Ovary (tissue), 10 donors: ENCODE measurements at regions of chr15 and their contacts with region 1.

Region 1: GRCh38 chr15:98668566-98669308 is 20.4 kb downstream of the IGF1R start:
- DNase-seq: no peak
- H3K4me3 ChIP-seq: no peak overlapping the region
- H3K27ac ChIP-seq: peak overlapping the region in 1 of 2 donors; percentile 22
- H3K4me1 ChIP-seq: peaks cover 30% of the 10 kb centered on the region
- H3K27me3 ChIP-seq: no peaks in the 10 kb centered on the region
- CTCF ChIP-seq: no peak
- EP300 ChIP-seq: no peak
- POLR2A ChIP-seq: no peak

Region 2: GRCh38 chr15:98734466-98735199 is 65.9 kb after region 1 on chr15:
- intact Hi-C with region 1: loop called in 1 of 4 experiments (anchors 10 kb)
- DNase-seq: no peak
- H3K4me3 ChIP-seq: no peak overlapping the region
- H3K27ac ChIP-seq: no peak overlapping the region
- H3K4me1 ChIP-seq: peaks cover 26% of the 10 kb centered on the region
- H3K27me3 ChIP-seq: no peaks in the 10 kb centered on the region
- CTCF ChIP-seq: no peak
- EP300 ChIP-seq: no peak
- POLR2A ChIP-seq: no peak

Region 3: GRCh38 chr15:99068186-99068585 is 399.4 kb after region 1 on chr15:
- intact Hi-C with region 1: loop called in 1 of 4 experiments (anchors 10 kb)
- DNase-seq: no peak
- H3K4me3 ChIP-seq: no peak overlapping the region
- H3K27ac ChIP-seq: no peak overlapping the region
- H3K4me1 ChIP-seq: no peaks in the 10 kb centered on the region
- H3K27me3 ChIP-seq: no peaks in the 10 kb centered on the region
- CTCF ChIP-seq: no peak
- EP300 ChIP-seq: no peak
- POLR2A ChIP-seq: no peak